Activated T-helper 2 cell treated with anti-CD3 and anti-CD28 coated beads, Interferon-gamma antibody, Interleukin-2, Interleukin-4, amounts not matched to agents 10 μg/mL and 5 μg/mL and 100 μg/mL, durations not matched to agents 14 hours and 24 hours and 36 hours (primary cell): ENCODE measurements at regions of chr20 and their contacts with region 1.

Region 1: DNA sequence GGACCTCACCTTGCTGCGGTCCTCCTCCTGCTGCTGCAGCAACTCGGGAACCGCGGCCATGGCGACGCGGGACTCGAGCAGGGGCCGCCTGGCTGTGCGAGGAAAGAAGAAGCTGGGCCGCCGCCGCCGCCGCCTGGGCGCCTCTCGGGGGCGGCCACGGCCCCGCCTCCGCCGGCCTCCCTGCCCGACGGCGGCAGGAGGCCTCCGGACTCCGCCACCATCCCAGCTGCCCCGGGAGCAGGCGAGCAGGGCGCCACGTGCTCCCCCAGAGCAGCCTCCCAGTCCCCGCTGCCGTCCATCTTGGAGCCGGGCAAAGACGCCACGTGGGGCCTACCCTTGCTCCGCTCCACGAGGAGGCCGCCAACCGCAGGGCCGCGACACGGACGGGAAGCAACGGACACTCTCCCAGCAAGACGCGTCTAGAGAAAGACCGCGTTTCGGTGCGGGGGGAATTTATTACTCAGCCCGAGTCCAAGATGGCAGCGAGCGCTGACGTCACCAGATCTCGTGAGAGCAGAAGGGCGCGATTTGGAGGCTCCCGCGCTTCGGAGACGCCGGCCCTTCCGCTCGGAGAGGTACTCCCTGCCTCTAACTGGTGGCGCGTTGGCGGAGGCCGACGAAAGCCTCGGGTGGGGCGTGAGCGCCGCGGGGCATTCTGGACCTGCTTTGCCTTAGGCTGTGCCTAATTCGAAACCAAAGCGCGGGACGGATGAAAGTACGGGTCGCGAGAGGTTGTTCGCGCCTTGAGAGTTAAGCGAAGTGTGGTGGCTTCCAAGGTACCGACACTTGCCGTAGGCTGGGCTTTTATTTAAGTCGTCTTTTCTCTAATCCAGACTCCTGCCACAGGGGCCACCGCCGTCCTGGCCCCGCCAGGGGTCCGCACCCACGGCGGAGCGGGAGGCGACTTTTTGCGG is at the starts of genes MGME1 and SNX5:
- DNase-seq: peak; percentile 99
- H3K4me3 Mint-ChIP-seq: peak within 1 kb of the TSS; percentile 98
- H3K27ac Mint-ChIP-seq: peak within 1 kb of the TSS; percentile 99
- H3K4me1 Mint-ChIP-seq: peaks cover 43% of the 10 kb centered on the region
- H3K27me3 Mint-ChIP-seq: no peaks in the 10 kb centered on the region
- total RNA-seq, gene MGME1: 30.0 and 33.0 TPM in 2 replicates
- total RNA-seq, gene SNX5: 225 and 231 TPM in 2 replicates

Region 2: DNA sequence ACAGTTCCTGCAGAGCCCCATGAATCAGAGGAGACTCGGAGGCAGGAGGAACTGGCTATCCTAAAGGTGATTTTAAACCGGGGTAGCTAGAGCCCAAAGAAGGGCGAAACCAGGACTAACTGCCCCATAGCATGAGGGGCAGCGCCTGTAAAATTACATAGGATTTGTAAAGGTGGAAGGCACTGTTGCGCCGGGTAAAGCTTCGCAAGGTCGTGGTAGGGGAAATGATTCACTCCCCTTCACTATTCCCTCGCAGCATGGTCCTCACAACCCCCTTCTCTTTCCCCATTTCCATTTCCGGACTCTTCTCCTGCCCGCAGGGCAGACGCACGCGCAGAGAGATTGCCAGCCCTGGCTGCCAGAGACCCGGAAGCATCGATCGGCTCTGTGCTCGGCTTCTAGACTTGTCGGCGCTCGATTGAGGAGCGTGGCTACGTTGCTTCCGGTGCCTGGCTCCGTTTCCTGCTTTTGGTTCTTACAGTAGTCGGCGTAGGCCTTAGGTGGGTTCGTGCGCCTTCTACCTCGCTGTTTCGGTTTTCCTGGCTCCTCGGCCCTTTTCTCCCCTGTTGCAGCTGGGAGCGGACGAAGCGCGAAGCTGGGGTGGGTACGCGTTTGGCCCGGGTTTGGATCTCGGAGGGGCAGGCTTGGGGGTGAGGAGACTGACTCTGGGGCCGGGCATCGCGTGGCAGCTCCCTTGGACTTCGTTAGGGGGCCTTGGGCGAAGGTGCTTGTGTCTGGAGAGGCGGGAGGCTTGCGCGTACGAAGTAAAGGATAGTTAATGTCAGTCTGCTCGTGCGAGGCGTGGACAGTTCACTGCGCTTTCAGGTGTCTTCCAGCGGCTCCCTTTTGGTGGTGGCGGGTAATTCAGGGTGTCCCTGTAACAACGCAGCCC is 1238.8 kb before region 1 on chr20 and contains the start of gene SNRPB2:
- intact Hi-C with region 1: loop called (anchors 5 kb)
- DNase-seq: peak; percentile 88
- H3K4me3 Mint-ChIP-seq: peak within 1 kb of the TSS; percentile 99
- H3K27ac Mint-ChIP-seq: peak within 1 kb of the TSS; percentile 97
- H3K4me1 Mint-ChIP-seq: peaks cover 45% of the 10 kb centered on the region
- H3K27me3 Mint-ChIP-seq: peaks cover 16% of the 10 kb centered on the region
- total RNA-seq, gene SNRPB2: 115 and 125 TPM in 2 replicates

Region 3: DNA sequence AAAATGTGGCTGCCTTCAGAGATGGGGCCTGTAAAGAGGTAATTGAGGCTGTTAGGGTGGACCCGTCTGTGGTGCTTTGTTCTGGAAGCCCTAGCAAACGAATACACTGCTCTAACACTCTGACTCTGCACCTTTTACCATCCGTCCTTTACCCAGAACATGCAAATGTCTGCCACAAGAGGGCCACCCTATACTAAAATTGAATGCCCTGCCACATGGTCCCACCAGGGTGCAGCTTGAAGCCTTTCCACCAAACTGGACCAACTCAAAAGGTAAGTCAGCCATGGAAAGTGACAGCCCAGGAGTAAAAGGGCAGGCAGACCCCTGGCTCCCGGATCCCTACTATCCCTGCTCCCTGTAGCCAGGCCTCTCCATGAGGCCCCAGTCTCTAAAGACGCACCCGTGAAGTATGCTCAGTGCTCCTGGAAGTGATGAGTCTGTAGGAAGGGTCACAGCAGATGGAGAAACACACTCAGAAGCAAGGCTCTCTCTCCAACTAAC is 431.6 kb before region 1 on chr20:
- intact Hi-C with region 1: loop called (anchors 10 kb)
- DNase-seq: peak; percentile 61
- H3K4me3 Mint-ChIP-seq: no peak overlapping the region
- H3K27ac Mint-ChIP-seq: no peak overlapping the region
- H3K4me1 Mint-ChIP-seq: peaks cover 26% of the 10 kb centered on the region
- H3K27me3 Mint-ChIP-seq: peaks cover 22% of the 10 kb centered on the region

Region 4: GRCh38 chr20:17617551-17618223 is 350.9 kb before region 1 on chr20:
- intact Hi-C with region 1: no loop called
- DNase-seq: no peak
- H3K4me3 Mint-ChIP-seq: no peak overlapping the region
- H3K27ac Mint-ChIP-seq: no peak overlapping the region
- H3K4me1 Mint-ChIP-seq: no peaks in the 10 kb centered on the region
- H3K27me3 Mint-ChIP-seq: no peaks in the 10 kb centered on the region

Region 5: GRCh38 chr20:17682103-17682888 is 286.3 kb before region 1 on chr20 and contains the start of gene RRBP1:
- intact Hi-C with region 1: loop called (anchors 1 kb)
- DNase-seq: peak; percentile 96
- H3K4me3 Mint-ChIP-seq: peak within 1 kb of the TSS; percentile 84
- H3K27ac Mint-ChIP-seq: peak within 1 kb of the TSS; percentile 84
- H3K4me1 Mint-ChIP-seq: peaks cover 30% of the 10 kb centered on the region
- H3K27me3 Mint-ChIP-seq: peaks cover 30% of the 10 kb centered on the region
- total RNA-seq, gene RRBP1: 73.1 and 73.6 TPM in 2 replicates

Region 6: GRCh38 chr20:17955302-17955701 is 13.3 kb before region 1 on chr20:
- intact Hi-C with region 1: loop called (anchors 1 kb)
- DNase-seq: no peak
- H3K4me3 Mint-ChIP-seq: no peak overlapping the region
- H3K27ac Mint-ChIP-seq: peak overlapping the region; percentile 86
- H3K4me1 Mint-ChIP-seq: peaks cover 62% of the 10 kb centered on the region
- H3K27me3 Mint-ChIP-seq: no peaks in the 10 kb centered on the region

Region 7: GRCh38 chr20:18032977-18033892 is 64.6 kb after region 1 on chr20:
- intact Hi-C with region 1: no loop called
- DNase-seq: no peak
- H3K4me3 Mint-ChIP-seq: no peak overlapping the region
- H3K27ac Mint-ChIP-seq: no peak overlapping the region
- H3K4me1 Mint-ChIP-seq: no peaks in the 10 kb centered on the region
- H3K27me3 Mint-ChIP-seq: no peaks in the 10 kb centered on the region

Region 8: GRCh38 chr20:18137412-18138265 is 169.0 kb after region 1 on chr20 and contains the starts of genes KAT14 and PET117:
- intact Hi-C with region 1: loop called (anchors 1 kb)
- DNase-seq: peak; percentile 90
- H3K4me3 Mint-ChIP-seq: peak within 1 kb of the TSS; percentile 80
- H3K27ac Mint-ChIP-seq: peak within 1 kb of the TSS; percentile 83
- H3K4me1 Mint-ChIP-seq: peaks cover 23% of the 10 kb centered on the region
- H3K27me3 Mint-ChIP-seq: no peaks in the 10 kb centered on the region
- total RNA-seq, gene KAT14: 15.3 and 16.5 TPM in 2 replicates
- total RNA-seq, gene PET117: 15.7 and 17.0 TPM in 2 replicates

Region 9: DNA sequence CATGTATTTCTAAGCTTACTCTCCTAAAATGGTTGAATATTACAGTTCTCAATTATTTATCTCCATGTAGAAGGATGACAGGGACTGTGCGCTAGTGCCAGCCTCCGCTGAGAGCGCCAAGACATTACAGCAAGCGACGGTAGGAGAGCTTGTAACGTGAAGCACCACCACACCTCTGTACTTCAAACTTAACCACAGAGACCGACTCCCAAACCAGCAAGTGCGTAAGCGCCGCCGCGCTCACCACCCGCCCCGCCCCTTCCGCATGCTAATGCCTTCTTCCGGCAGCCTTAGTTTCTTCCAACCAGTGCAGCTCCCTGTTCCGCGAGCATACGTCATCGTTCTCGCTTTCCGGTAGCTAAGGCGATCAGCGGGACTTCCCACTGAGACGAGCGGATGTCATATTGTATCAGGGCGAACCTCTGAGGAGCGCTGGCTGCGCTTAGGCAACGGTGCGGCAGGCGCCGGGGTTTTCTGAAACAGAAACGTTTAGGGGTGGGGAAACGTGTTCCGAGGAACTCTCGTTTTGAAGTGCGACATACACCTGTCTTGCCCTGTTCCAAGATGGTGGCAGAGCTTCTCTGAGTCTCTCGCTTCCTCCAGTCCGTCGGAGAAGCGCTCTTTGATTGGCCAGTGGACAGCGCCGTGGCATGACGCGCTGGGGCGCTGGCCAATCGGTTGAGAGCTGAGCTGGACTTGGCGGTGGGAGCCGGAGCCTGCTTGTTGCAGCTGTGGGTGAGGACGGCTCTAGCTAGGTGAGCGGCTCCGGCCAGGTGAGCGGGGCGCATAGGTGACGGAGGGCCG is 538.8 kb after region 1 on chr20 and contains the start of gene SEC23B:
- intact Hi-C with region 1: loop called (anchors 1 kb)
- DNase-seq: peak; percentile 97
- H3K4me3 Mint-ChIP-seq: peak within 1 kb of the TSS; percentile 100
- H3K27ac Mint-ChIP-seq: peak within 1 kb of the TSS; percentile 100
- H3K4me1 Mint-ChIP-seq: peaks cover 27% of the 10 kb centered on the region
- H3K27me3 Mint-ChIP-seq: no peaks in the 10 kb centered on the region
- total RNA-seq, gene SEC23B: 126 and 131 TPM in 2 replicates